H1 (cell line): ENCODE measurements at regions of chr2 and their contacts with region 1.

Region 1: DNA sequence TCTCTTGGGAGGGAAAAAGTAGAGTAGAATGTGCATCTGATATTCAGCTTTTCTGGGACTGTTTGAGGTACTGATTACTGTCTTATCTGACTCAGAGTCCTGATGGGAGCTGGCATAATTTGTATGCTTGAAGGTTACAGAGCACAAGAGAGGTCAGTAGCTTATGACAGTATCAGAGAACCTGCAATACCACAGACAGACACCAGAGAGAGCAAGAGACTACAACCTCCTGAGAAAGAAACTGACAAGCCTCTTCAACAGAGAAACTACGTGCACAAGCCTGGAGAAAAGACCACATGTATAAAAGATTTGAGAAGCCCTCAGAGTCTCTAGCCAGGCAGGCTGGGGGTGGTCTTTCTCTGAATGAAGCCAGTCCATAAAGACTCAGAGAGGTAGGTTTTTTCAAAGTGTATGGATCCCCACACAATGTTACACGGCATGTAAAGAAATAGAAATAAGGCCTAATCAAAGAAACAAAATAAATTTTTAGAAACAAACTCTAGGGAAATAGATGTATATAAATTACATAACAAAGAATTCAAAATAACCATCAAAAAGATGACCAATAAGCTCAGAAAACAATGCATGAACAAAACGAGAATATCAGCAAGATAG is 568.3 kb downstream of the LRRTM4 start:
- DNase-seq: peak in 1 of 2 experiments; percentile 74
- H3K4me3 ChIP-seq: no peak overlapping the region
- H3K27ac ChIP-seq: no peak overlapping the region
- H3K4me1 ChIP-seq: peaks cover 0 to 3% (median 0%) of the 10 kb centered on the region in 4 experiments; a peak in 1 of 7 replicates
- H3K27me3 ChIP-seq: no peaks in the 10 kb centered on the region
- CTCF ChIP-seq: peak in 2 of 3 experiments; percentile 70 to 89; a peak in 3 of 4 replicates
- EP300 ChIP-seq: no peak
- POLR2A ChIP-seq: no peak
- RAD21 ChIP-seq: peak; percentile 98 to 99

Region 2: GRCh38 chr2:76932550-76932949 is 21.3 kb before region 1 on chr2:
- CTCF ChIA-PET with region 1: no interaction called
- POLR2A ChIA-PET with region 1: no interaction called
- DNase-seq: no peak
- H3K4me3 ChIP-seq: no peak overlapping the region
- H3K27ac ChIP-seq: no peak overlapping the region
- H3K4me1 ChIP-seq: no peaks in the 10 kb centered on the region
- H3K27me3 ChIP-seq: no peaks in the 10 kb centered on the region
- CTCF ChIP-seq: no peak
- EP300 ChIP-seq: no peak
- POLR2A ChIP-seq: no peak
- RAD21 ChIP-seq: no peak

Region 3: GRCh38 chr2:77034445-77034844 is 80.6 kb after region 1 on chr2:
- CTCF ChIA-PET with region 1: interaction called, 12 read pairs
- POLR2A ChIA-PET with region 1: no interaction called
- DNase-seq: no peak
- H3K4me3 ChIP-seq: no peak overlapping the region
- H3K27ac ChIP-seq: no peak overlapping the region
- H3K4me1 ChIP-seq: peaks cover 0 to 2% (median 0%) of the 10 kb centered on the region in 4 experiments; a peak in 1 of 7 replicates
- H3K27me3 ChIP-seq: no peaks in the 10 kb centered on the region
- CTCF ChIP-seq: no peak
- EP300 ChIP-seq: no peak
- POLR2A ChIP-seq: no peak
- RAD21 ChIP-seq: no peak

Region 4: DNA sequence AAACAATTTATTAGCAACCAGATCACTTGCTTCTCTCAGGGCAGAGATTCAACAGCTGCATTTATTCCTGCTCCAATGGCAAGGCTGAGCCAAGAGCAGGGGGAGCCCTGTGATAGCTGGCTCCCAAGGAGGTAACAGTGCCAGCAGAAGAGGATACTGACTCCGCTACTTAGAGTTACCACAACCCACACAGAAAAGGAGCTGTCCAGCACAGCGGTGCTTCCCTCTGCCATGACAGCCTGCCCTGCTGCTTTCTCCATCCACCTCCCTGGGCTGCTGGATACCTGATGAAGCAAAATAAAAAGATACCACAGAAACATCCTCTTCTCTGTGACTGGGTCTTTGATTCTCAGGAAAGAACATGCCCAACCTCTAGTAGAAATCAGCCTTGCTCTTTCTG is 101.1 kb after region 1 on chr2:
- CTCF ChIA-PET with region 1: no interaction called
- POLR2A ChIA-PET with region 1: no interaction called
- DNase-seq: peak; percentile 7 to 49
- H3K4me3 ChIP-seq: no peak overlapping the region
- H3K27ac ChIP-seq: no peak overlapping the region
- H3K4me1 ChIP-seq: no peaks in the 10 kb centered on the region; a peak in 1 of 7 replicates
- H3K27me3 ChIP-seq: no peaks in the 10 kb centered on the region
- CTCF ChIP-seq: no peak
- EP300 ChIP-seq: no peak
- POLR2A ChIP-seq: no peak
- RAD21 ChIP-seq: no peak; a peak in 1 of 4 replicates

Region 5: DNA sequence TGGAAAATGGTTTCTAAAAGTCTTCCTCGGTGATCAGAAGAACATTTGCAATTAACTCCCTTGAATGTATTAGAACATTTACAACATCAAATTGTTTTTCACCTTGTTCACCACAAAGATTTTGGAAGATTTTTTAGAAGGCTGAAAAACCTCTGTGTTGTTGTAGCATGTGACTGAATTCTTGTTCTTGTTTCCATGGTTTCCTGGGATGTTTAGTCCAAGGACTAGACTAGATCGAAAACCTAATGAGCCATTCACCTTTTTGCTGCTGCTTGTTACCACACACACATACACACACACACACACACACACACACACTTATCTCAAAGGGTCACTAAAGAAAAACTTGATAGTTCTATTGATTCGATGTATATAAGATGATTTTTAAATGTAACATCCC is 188.3 kb after region 1 on chr2:
- CTCF ChIA-PET with region 1: no interaction called
- POLR2A ChIA-PET with region 1: no interaction called
- DNase-seq: no peak
- H3K4me3 ChIP-seq: no peak overlapping the region
- H3K27ac ChIP-seq: no peak overlapping the region
- H3K4me1 ChIP-seq: no peaks in the 10 kb centered on the region
- H3K27me3 ChIP-seq: no peaks in the 10 kb centered on the region
- CTCF ChIP-seq: no peak
- EP300 ChIP-seq: no peak
- POLR2A ChIP-seq: no peak
- RAD21 ChIP-seq: no peak